GM10248 (cell line): ENCODE measurements at regions of chr1 and their contacts with region 1.

Region 1: GRCh38 chr1:209627732-209628196 is 24.5 kb downstream of the LAMB3 start:
- DNase-seq: peak; percentile 86
- CTCF ChIP-seq: peak; percentile 99

Region 2: DNA sequence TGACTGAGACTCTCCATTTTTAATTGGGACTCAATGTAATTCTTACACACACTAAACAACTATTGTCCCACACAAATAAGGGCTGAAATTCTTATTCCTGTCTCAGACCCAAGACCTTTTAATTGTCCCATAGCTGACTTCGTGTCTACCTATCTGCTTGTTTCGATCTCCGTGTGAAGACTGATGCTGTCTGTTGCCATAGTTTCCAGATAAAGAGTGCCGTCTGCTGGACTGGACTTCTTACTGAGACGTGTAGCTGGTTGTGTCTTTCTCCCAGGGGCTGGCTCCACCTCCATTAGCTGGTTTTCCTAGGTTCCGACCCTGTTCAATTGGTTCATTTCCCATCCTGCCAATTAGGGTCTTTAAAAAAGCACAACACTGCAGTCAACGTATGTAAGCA is 1148.3 kb before region 1 on chr1:
- CTCF ChIA-PET with region 1: no interaction called
- POLR2A ChIA-PET with region 1: no interaction called
- DNase-seq: no peak
- CTCF ChIP-seq: no peak

Region 3: DNA sequence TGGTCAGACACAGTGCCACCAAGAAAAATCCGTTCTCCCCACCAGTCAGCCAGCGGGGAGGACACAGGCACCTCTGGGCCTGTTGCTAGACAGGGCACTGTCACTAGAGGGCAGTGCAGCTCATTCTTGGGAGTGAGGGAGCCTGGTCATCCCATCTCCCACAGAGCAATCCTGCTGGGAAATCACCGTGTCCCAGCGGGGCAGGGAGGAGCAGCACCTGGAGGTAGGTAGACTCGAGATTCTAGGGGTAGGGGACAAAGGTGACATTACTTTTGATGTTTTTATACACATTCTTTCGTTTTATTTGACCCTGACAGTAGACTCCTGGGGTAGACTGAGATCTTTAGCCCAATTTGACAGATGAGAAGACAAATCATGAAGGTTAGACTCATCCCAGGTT is 51.0 kb before region 1 on chr1:
- CTCF ChIA-PET with region 1: interaction called, 144 read pairs
- POLR2A ChIA-PET with region 1: no interaction called
- DNase-seq: peak; percentile 80
- CTCF ChIP-seq: peak; percentile 91

Region 4: DNA sequence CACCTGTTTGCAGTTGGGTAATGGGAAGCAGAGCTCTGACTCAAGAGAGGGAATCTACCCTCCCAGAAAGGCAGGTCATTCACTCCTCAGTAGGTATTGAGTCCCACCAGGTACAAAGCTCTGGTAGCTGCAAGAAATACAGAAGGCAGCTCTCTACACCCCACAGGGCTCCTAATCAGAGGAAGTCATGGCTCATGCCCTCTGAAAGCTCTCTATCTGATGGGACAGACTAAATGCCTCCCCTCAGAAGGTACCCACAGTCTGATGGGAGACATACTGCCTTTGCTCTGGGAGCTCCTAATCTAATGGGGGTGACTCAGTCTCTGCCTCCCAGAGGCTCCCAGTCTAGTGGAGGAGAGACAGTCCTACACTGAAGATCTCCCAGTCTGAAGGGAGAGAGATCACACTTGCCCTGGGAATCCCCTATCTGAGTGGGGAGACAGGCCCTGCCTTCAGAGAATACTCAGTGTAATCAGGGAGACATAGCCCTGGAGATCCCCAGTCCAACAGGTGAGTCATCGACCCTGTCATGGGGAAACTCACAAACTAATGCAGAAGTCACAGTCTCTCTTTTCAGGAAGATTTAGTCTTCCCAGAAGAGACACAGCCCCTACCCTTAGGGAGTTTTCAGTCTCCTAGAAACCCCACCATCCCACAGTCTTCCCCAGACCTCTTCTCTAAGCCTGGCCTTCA is 20.5 kb before region 1 on chr1:
- CTCF ChIA-PET with region 1: interaction called, 92 read pairs
- POLR2A ChIA-PET with region 1: no interaction called
- DNase-seq: peak; percentile 74
- CTCF ChIP-seq: no peak

Region 5: GRCh38 chr1:209643285-209644020 is 15.7 kb after region 1 on chr1:
- CTCF ChIA-PET with region 1: interaction called, 12 read pairs
- POLR2A ChIA-PET with region 1: no interaction called
- DNase-seq: no peak
- CTCF ChIP-seq: no peak

Region 6: DNA sequence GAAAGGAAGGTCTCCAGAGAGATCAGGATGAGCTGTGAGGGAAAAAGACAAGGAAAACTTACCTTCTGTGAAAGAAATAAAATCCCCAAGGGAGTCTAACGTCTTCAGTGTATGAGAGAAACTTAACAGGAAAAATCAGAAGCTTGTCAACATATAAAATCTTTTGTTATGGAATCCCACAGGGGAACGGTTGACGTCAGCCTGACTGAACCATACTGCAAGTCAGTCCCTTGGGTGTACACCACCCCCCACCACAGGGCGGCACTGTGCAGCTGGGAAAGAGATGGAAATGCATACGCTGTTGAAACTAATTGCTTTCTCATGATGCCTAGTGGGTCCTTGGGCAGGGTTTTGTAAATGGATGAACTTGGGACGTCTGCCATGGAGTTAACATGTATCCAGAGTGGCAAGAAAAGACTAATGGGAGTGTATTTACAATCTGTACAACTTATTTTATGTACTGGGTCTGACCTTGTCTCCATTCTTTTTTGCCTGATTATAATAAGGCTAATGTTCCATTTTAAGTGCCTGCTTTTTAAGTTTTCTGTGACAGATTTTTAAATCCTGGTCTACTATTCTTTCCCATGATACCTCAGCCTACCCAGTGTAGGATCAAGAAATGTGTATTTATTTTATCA is 222.7 kb after region 1 on chr1:
- CTCF ChIA-PET with region 1: no interaction called
- POLR2A ChIA-PET with region 1: no interaction called
- DNase-seq: peak; percentile 55
- CTCF ChIP-seq: peak; percentile 62